ENCODE measurements at regions of chr9 and their contacts with region 1.

Region 1: GRCh38 chr9:107198718-107199117 is 84.4 kb upstream of the RAD23B start:
- DNase-seq: no peak
- H3K4me3 ChIP-seq: no peak overlapping the region
- H3K27ac ChIP-seq: no peak overlapping the region
- H3K4me1 ChIP-seq: no peaks in the 10 kb centered on the region
- H3K27me3 ChIP-seq: no peaks in the 10 kb centered on the region
- CTCF ChIP-seq: no peak
- EP300 ChIP-seq: no peak
- POLR2A ChIP-seq: no peak

Region 2: DNA sequence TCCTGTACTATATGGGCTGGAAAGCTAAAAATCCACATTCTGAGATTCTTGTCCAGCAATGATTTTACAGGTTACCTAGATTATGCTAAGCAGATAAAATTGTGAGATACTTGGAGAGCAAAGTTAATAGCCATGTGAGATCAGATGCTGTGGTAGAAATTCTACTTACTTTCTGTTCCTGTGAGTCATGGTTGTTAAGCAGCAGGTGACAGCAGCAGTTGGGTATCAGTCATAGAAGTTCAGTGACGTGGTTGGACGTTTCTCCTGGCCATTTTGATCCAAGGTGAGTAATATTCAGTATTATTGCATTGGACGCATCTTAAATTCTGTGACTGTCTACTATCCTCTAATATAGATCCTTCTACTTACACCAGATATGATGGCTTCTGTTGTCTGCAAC is 979.9 kb before region 1 on chr9:
- intact Hi-C with region 1: loop called in 1 of 4 experiments (anchors 5 kb)
- DNase-seq: no peak
- H3K4me3 ChIP-seq: no peak overlapping the region
- H3K27ac ChIP-seq: no peak overlapping the region
- H3K4me1 ChIP-seq: no peaks in the 10 kb centered on the region
- H3K27me3 ChIP-seq: no peaks in the 10 kb centered on the region
- CTCF ChIP-seq: no peak
- EP300 ChIP-seq: no peak
- POLR2A ChIP-seq: no peak

Region 3: GRCh38 chr9:107260437-107261086 is 61.8 kb after region 1 on chr9:
- intact Hi-C with region 1: no loop called
- DNase-seq: no peak
- H3K4me3 ChIP-seq: no peak overlapping the region
- H3K27ac ChIP-seq: no peak overlapping the region
- H3K4me1 ChIP-seq: no peaks in the 10 kb centered on the region
- H3K27me3 ChIP-seq: no peaks in the 10 kb centered on the region
- CTCF ChIP-seq: no peak
- EP300 ChIP-seq: no peak
- POLR2A ChIP-seq: no peak

Measured in ovary (tissue), 10 donors.